Activated CD4-positive, alpha-beta T cell treated with anti-CD3 and anti-CD28 coated beads, Interleukin-2, amount 10 ng/mL, durations not matched to agents 24 days and 14 days (primary cell): ENCODE measurements at regions of chr3 and their contacts with region 1.

Region 1: GRCh38 chr3:44529927-44530326 is 25.1 kb upstream of the ZKSCAN7 start:
- DNase-seq: peak; percentile 72
- H3K4me3 Mint-ChIP-seq: no peak overlapping the region
- H3K27ac Mint-ChIP-seq: no peak overlapping the region
- H3K4me1 Mint-ChIP-seq: peaks cover 2% of the 10 kb centered on the region
- H3K27me3 Mint-ChIP-seq: peaks cover 9% of the 10 kb centered on the region

Region 2: DNA sequence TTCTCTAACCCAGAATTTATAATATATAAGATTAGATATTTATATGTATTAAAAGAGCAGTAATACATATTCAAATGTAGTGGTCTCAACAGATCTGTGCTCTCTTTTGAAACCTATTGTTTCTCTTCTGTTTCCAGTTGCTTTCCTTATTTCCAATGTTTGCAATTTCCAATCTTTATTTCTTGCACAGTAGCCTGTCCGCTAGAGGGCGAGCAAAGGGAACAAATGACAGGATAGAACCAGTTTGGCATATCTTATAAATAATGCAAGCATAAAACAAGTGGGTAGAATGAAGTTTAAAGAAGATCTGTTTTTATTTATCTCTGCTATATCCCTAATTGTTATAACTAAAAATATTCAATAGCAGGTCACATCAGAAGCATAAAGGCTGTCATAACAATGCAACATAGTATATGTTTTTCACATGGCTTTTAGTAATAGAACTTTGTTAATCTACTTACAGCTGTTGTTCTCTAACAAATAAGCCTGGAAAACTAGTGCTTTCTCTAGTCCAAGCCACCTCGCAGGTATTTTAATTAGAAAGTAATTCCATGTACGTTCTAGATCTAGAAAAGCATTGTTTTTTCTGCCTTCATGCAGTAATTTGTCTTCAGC is 206.5 kb before region 1 on chr3:
- intact Hi-C with region 1: loop called (anchors 5 kb)
- DNase-seq: peak; percentile 85
- H3K4me3 Mint-ChIP-seq: no peak overlapping the region
- H3K27ac Mint-ChIP-seq: no peak overlapping the region
- H3K4me1 Mint-ChIP-seq: no peaks in the 10 kb centered on the region
- H3K27me3 Mint-ChIP-seq: peaks cover 31% of the 10 kb centered on the region

Region 3: GRCh38 chr3:44913868-44914468 is 384.0 kb after region 1 on chr3:
- intact Hi-C with region 1: loop called (anchors 1 kb)
- DNase-seq: peak; percentile 88
- H3K4me3 Mint-ChIP-seq: no peak overlapping the region
- H3K27ac Mint-ChIP-seq: no peak overlapping the region
- H3K4me1 Mint-ChIP-seq: no peaks in the 10 kb centered on the region
- H3K27me3 Mint-ChIP-seq: peaks cover 2% of the 10 kb centered on the region